Posterior vena cava (tissue), 2 donors: ENCODE measurements at regions of chr6 and their contacts with region 1.

Region 1: DNA sequence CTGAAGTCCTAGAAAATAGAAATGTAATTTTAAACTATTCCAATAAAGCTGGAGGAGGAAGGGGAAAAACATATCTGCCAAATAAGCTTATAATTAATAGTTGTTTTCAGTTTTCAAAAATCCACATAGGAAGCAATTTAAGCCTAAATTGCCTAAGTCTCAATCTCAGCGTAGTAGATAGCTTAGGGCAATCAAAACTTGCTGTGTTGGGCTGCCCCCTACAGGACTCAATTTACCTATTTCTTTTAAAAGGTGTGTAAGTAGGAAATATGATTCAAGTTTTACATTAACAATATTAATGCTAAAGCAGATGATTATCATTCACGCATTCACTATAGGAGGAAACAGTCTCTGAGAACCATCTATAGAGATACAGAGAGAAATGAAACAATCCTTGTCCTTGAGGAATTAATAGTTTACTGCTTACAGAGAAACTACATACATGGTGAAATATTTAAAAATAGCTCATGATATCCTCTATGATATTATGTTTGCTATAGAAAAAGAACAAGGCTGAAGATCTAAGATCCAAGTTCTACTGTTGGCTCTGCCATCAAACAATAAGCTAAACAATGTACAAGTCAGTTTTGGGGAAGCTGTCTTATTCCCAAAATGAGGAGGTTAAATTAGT is 102.1 kb downstream of the ATG5 start:
- DNase-seq: no peak

Region 2: DNA sequence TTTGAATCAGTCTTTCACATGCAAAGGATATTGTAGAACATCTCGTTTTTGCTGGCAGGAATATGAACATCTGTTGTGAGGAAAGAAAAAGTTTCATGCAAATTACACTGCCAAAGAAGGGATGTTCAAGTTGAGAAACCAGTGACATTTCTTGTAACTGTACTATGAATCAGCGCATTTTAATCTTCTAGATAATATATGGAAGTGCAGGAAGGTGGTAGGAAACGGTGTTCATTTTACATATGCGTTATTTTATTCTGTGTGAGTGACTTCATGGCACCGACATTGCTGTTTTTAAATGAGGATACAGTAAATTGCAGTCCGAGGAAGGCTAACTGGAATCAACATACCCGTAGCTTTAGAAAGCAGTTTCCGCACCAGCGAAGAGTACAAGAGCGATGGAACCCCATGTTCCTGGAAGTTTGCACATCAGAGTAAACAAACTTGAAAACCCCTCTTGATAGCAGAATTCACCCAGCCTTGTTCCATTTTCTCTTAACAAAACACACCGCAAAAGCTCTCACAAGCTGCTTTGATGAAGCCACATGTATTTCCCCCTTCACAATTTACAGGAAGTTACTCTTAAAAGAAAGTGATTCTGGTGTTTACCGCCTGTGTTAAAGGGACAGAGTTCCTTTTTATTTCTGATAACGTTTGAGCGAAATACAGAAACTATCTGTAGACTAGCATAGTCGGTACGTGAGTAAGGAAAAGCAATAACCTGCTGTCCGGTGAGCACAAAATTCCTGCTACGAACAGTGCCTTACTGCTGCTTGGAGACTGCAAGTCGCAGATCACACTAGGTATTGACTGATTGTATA is 125.8 kb before region 1 on chr6:
- intact Hi-C with region 1: loop called in 1 of 2 experiments (anchors 10 kb)
- DNase-seq: no peak

Region 3: GRCh38 chr6:106421496-106421895 is 198.1 kb after region 1 on chr6:
- intact Hi-C with region 1: no loop called
- DNase-seq: no peak